ENCODE measurements at regions of chr5 and their contacts with region 1.

Region 1: GRCh38 chr5:54480296-54480695 is 24.8 kb downstream of the HSPB3 start:
- DNase-seq: no peak
- H3K4me3 ChIP-seq: no peak overlapping the region
- H3K27ac ChIP-seq: no peak overlapping the region
- H3K4me1 ChIP-seq: no peaks in the 10 kb centered on the region
- H3K27me3 ChIP-seq: no peaks in the 10 kb centered on the region
- CTCF ChIP-seq: no peak
- POLR2A ChIP-seq: no peak

Region 2: GRCh38 chr5:54243473-54244080 is 236.7 kb before region 1 on chr5:
- intact Hi-C with region 1: loop called (anchors 10 kb)
- DNase-seq: no peak
- H3K4me3 ChIP-seq: no peak overlapping the region
- H3K27ac ChIP-seq: no peak overlapping the region
- H3K4me1 ChIP-seq: peaks cover 0 to 31% (median 16%) of the 10 kb centered on the region in 6 donors
- H3K27me3 ChIP-seq: no peaks in the 10 kb centered on the region
- CTCF ChIP-seq: peak; percentile 24 to 75 (median 56)
- POLR2A ChIP-seq: no peak

Region 3: DNA sequence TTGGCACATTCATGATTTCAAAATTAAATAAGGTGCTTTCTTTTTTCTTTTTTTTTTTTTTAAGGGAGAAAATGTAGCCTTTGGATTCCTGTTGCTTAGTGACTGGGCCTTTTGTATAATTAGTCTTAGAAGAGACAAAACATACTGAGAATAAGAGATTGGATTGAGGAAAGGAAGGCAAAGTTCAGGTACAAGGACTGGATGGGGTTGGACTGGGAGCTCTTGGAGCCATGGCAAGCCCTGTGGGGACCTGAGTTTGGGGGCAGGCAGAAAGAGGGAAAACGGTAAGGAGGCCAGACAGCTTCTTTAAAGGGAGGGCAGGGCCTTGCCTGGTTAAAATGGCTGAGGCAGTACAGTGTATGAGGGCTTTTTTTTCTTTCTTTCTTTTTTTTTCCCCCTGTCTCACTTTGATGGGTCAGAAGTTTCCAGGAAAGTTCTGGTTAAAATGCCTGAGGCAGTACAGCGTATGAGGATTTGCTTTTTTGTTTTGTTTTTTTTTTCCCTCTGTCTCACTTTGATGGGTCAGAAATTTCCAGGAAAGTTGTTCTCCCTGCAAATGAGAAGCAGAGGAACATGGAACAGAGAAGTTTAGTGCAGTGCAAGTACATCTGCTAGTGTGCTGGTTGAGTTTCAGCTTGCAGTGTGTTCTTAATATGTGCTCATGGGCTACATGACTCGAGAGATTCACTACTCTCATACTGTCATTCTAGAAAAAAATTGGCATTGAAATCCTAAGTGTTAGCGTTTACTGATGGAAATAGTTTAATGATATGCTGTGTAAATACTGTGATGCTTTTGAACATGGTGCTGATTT is 54.1 kb after region 1 on chr5:
- intact Hi-C with region 1: no loop called
- DNase-seq: no peak
- H3K4me3 ChIP-seq: no peak overlapping the region
- H3K27ac ChIP-seq: peak overlapping the region in 7 of 8 donors; percentile 18 to 69 (median 45)
- H3K4me1 ChIP-seq: peaks cover 31 to 98% (median 76%) of the 10 kb centered on the region in 6 donors
- H3K27me3 ChIP-seq: no peaks in the 10 kb centered on the region
- CTCF ChIP-seq: no peak
- POLR2A ChIP-seq: no peak